Calu3 (cell line): ENCODE measurements at regions of chr10 and their contacts with region 1.

Region 1: GRCh38 chr10:70578371-70578947 is 24.1 kb downstream of the PRF1 start:
- DNase-seq: peak; percentile 86
- H3K4me3 Mint-ChIP-seq: peak overlapping the region; percentile 39
- H3K27ac Mint-ChIP-seq: peak overlapping the region; percentile 50
- H3K4me1 Mint-ChIP-seq: peaks cover 53% of the 10 kb centered on the region
- H3K27me3 Mint-ChIP-seq: peaks cover 18% of the 10 kb centered on the region
- CTCF ChIP-seq: no peak

Region 2: DNA sequence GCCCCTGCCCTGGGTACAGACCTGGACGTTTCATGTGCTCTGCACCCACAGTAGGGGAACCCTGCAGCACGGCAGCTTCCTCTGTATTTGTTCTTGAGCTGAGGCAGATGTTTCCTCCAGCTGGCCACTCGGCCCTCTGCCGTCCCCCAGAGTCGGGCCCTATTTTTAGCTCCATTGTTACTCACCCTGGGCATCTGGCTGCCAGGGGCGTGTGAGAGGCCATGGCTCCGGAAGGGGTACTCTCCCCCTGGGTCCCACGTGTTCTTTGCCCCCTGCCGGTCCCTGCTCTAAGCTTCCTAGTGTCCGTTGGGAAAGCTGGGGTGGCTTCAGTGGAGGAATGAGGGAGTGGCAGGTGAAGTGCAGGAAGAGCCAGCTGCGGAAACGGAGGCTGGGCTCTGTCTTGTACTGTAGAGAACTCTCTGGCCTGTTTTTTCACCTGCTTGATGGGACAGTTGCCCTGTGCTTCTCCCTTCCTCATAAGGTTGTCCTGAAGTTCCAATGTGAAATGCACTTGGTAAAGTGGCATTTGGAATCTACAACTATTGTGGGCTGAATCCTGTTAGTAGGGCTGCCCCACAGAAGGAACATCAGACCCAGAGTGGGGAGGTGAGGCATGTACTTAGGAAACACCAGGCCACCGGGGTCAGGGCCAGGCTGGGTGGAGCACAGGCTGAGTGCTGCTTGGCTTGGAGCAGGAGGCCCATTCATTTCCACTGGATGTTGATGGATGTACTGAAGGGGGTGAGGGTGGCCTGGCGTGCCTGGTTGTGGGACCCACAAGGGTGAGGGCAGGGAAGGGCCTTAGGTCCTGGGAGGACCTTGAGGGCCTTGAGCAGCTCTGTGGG is 69.3 kb before region 1 on chr10:
- CTCF ChIA-PET with region 1: no interaction called
- intact Hi-C with region 1: no loop called
- DNase-seq: no peak
- H3K4me3 Mint-ChIP-seq: no peak overlapping the region
- H3K27ac Mint-ChIP-seq: no peak overlapping the region
- H3K4me1 Mint-ChIP-seq: no peaks in the 10 kb centered on the region
- H3K27me3 Mint-ChIP-seq: peaks cover 51% of the 10 kb centered on the region
- CTCF ChIP-seq: no peak

Region 3: DNA sequence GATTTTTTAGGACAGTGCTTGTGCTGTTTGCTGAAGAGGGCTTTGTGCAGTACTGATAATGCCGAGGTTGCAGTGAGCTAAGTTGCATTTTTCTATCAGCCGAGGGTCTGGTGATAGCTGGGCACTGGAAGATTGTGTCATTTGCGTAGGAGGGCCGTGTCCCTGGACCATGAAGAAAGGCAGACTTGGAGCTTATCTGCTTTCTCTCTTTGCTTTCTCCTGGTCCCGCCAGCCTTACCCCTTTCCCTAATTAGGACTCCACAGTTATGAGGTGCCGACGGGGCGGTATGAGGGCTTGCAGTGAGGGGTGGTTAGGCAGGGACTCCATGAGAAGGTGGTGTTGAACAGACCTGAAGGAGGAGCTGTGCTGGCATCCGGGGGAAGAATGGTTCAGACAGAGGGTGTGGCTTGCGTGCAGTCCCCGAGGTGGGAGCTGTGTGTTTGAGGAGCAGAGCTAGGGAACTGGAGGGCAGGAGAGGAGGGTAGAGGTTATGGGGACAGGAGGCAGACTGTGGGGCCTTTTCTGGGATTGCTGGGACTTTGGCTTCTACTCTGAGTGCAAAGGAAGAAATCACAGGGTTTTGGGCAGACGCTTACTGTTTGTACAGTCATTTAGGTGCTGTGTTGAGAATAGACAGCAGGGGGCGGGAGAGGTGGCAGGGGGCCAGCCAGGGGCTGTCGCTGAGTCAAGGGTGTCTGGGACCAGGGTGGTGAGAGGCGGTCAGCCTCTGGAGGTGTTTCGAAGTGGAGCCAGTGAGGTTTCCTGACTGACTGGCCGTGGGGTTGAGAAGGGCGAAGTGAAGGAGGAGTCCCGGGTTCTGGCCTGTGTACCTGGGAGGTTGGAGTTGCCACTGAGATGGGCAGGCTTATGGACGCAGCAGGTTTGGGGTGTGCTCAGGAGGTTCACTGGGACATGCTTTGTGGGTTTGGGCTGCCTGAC is 19.3 kb before region 1 on chr10:
- CTCF ChIA-PET with region 1: interaction called, 7 read pairs
- intact Hi-C with region 1: loop called (anchors 1 kb)
- DNase-seq: peak; percentile 86
- H3K4me3 Mint-ChIP-seq: peak overlapping the region; percentile 46
- H3K27ac Mint-ChIP-seq: no peak overlapping the region
- H3K4me1 Mint-ChIP-seq: peaks cover 20% of the 10 kb centered on the region
- H3K27me3 Mint-ChIP-seq: peaks cover 73% of the 10 kb centered on the region
- CTCF ChIP-seq: peak; percentile 71